Spleen (tissue), 13 donors: ENCODE measurements at regions of chr1 and their contacts with region 1.

Region 1: DNA sequence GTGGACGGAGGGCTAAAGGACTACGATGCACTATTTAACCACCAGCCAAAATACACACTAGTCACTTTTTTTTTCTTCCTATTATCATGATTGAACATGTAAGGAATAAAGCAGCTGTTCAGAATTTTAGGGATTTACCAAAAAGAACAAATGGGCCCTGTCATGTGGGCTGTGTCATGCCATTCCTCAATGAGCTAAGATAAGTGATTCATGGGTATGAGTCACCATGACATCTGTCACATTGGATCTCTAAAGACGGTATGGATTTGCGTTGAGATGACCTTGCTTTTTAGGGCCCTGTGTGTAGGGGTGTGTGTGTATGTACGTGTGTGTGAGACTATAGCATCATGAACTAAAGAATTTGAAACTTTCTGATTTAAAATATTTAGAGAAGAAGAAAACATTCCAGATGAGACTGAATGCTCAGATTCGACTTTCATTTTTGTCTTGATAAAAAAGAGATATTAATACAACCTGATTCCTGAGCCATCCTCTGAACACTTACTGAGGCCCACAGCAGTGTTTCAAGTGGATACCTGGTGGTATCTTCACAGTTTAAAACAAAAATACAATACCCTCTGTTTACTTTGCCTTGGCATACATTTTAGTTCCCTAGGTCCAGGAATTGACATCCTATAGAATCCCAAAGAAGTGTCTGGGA is 246.1 kb upstream of the DUSP10 start:
- DNase-seq: no peak
- H3K4me3 ChIP-seq: no peak overlapping the region
- H3K27ac ChIP-seq: no peak overlapping the region
- H3K4me1 ChIP-seq: no peaks in the 10 kb centered on the region
- H3K27me3 ChIP-seq: no peaks in the 10 kb centered on the region
- CTCF ChIP-seq: no peak
- POLR2A ChIP-seq: no peak

Region 2: DNA sequence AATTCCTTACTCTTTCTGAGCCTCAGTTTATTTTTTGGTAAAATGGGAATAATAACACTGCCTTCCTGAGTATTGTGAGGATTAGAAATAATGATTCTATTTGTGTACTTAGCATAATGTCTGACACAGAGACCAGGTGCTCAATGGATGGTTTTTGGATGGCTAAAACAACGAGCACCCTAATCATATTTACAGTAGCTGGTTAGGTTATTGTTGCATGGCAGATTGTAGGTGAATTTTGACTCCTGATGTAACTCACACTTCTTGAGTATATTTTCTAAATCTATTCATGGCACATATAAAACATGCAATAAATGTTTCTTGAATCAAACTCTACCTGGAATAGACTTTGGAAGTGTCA is 234.2 kb before region 1 on chr1:
- intact Hi-C with region 1: loop called (anchors 10 kb)
- DNase-seq: no peak
- H3K4me3 ChIP-seq: no peak overlapping the region
- H3K27ac ChIP-seq: no peak overlapping the region
- H3K4me1 ChIP-seq: peaks cover 0 to 15% (median 1%) of the 10 kb centered on the region in 6 donors
- H3K27me3 ChIP-seq: no peaks in the 10 kb centered on the region
- CTCF ChIP-seq: no peak
- POLR2A ChIP-seq: no peak